H1 (cell line): ENCODE measurements at regions of chr20 and their contacts with region 1.

Region 1: DNA sequence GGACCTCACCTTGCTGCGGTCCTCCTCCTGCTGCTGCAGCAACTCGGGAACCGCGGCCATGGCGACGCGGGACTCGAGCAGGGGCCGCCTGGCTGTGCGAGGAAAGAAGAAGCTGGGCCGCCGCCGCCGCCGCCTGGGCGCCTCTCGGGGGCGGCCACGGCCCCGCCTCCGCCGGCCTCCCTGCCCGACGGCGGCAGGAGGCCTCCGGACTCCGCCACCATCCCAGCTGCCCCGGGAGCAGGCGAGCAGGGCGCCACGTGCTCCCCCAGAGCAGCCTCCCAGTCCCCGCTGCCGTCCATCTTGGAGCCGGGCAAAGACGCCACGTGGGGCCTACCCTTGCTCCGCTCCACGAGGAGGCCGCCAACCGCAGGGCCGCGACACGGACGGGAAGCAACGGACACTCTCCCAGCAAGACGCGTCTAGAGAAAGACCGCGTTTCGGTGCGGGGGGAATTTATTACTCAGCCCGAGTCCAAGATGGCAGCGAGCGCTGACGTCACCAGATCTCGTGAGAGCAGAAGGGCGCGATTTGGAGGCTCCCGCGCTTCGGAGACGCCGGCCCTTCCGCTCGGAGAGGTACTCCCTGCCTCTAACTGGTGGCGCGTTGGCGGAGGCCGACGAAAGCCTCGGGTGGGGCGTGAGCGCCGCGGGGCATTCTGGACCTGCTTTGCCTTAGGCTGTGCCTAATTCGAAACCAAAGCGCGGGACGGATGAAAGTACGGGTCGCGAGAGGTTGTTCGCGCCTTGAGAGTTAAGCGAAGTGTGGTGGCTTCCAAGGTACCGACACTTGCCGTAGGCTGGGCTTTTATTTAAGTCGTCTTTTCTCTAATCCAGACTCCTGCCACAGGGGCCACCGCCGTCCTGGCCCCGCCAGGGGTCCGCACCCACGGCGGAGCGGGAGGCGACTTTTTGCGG is at the starts of genes MGME1 and SNX5:
- DNase-seq: peak; percentile 98 to 99
- H3K4me3 ChIP-seq: peak within 1 kb of the TSS; percentile 77 to 99 (median 91)
- H3K27ac ChIP-seq: peak within 1 kb of the TSS; percentile 100
- H3K4me1 ChIP-seq: peaks cover 5 to 14% (median 10%) of the 10 kb centered on the region in 4 experiments; a peak in 6 of 7 replicates
- H3K27me3 ChIP-seq: no peaks in the 10 kb centered on the region
- CTCF ChIP-seq: no peak
- EP300 ChIP-seq: no peak
- POLR2A ChIP-seq: peak; percentile 97 to 98
- RAD21 ChIP-seq: no peak
- total RNA-seq, gene MGME1: 56.3 and 59.0 TPM in 2 replicates
- total RNA-seq, gene SNX5: 181 and 194 TPM in 2 replicates

Region 2: GRCh38 chr20:17946572-17947473 is 21.8 kb before region 1 on chr20:
- CTCF ChIA-PET with region 1: no interaction called
- POLR2A ChIA-PET with region 1: interaction called, 65 read pairs
- DNase-seq: no peak
- H3K4me3 ChIP-seq: no peak overlapping the region
- H3K27ac ChIP-seq: no peak overlapping the region
- H3K4me1 ChIP-seq: no peaks in the 10 kb centered on the region
- H3K27me3 ChIP-seq: no peaks in the 10 kb centered on the region
- CTCF ChIP-seq: no peak
- EP300 ChIP-seq: no peak
- POLR2A ChIP-seq: no peak
- RAD21 ChIP-seq: no peak

Region 3: DNA sequence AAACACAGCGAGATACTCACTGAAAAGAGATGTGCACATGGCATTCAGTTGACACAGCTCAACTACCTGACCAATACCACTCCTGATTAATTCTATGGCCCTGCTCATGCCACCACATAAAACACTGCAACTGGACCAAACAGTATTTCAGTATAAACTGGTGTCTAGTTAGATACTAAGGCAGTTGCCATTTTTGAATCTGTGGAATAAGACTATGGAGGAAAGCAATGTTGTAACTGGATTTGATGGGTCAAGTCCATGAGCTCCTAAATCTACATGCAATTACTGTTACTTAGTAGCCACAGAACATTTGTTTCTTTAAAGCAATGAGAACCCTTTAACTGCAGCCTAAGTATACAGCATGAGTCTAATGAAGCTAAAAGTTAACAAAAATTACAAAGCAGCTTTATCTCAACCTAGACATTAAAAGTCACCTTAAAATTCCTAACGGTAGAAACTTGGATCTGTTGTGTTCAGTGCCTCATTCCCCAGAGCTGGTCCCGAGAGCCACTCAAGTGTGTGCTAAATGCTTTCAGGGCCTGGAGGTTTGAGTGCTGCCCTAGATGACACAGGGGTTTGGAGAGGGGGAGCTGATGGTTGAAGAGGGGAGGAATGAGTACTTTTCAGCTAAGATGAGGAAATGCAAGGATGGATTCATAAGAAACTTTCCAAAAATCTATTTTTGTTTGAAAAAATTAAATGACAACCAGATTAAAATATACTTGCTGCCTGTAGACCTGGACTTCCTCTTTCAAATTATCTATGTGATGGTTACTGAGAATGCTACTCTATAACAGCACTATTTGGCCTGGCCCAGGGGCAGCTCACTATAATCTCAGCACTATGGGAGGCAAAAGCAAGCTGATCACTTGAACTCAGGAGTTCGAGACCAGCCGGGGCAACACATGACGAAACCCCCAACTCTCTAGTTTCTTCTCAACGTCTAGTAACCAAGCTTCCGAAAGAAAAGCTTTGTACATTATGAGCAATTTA is 15.6 kb before region 1 on chr20:
- CTCF ChIA-PET with region 1: interaction called, 5 read pairs
- POLR2A ChIA-PET with region 1: interaction called, 124 read pairs
- DNase-seq: no peak
- H3K4me3 ChIP-seq: no peak overlapping the region
- H3K27ac ChIP-seq: 0 out of 2 replicates have a peak overlapping the region, but pooled peaks have one; percentile 11
- H3K4me1 ChIP-seq: peaks cover 0 to 7% (median 0%) of the 10 kb centered on the region in 4 experiments; a peak in 2 of 7 replicates
- H3K27me3 ChIP-seq: no peaks in the 10 kb centered on the region
- CTCF ChIP-seq: no peak
- EP300 ChIP-seq: no peak
- POLR2A ChIP-seq: no peak; a peak in 1 of 3 replicates
- RAD21 ChIP-seq: no peak

Region 4: GRCh38 chr20:17958373-17959256 is 10.0 kb before region 1 on chr20:
- CTCF ChIA-PET with region 1: interaction called, 5 read pairs
- POLR2A ChIA-PET with region 1: interaction called, 124 read pairs
- DNase-seq: no peak
- H3K4me3 ChIP-seq: no peak overlapping the region
- H3K27ac ChIP-seq: no peak overlapping the region
- H3K4me1 ChIP-seq: peaks cover 0 to 27% (median 6%) of the 10 kb centered on the region in 4 experiments; a peak in 5 of 7 replicates
- H3K27me3 ChIP-seq: no peaks in the 10 kb centered on the region
- CTCF ChIP-seq: no peak
- EP300 ChIP-seq: no peak
- POLR2A ChIP-seq: 0 out of 3 replicates have a peak, but pooled peaks of 1 of the 2 experiments have one; percentile 69
- RAD21 ChIP-seq: no peak